Heart left ventricle (tissue), 16 donors: ENCODE measurements at regions of chr4 and their contacts with region 1.

Region 1: DNA sequence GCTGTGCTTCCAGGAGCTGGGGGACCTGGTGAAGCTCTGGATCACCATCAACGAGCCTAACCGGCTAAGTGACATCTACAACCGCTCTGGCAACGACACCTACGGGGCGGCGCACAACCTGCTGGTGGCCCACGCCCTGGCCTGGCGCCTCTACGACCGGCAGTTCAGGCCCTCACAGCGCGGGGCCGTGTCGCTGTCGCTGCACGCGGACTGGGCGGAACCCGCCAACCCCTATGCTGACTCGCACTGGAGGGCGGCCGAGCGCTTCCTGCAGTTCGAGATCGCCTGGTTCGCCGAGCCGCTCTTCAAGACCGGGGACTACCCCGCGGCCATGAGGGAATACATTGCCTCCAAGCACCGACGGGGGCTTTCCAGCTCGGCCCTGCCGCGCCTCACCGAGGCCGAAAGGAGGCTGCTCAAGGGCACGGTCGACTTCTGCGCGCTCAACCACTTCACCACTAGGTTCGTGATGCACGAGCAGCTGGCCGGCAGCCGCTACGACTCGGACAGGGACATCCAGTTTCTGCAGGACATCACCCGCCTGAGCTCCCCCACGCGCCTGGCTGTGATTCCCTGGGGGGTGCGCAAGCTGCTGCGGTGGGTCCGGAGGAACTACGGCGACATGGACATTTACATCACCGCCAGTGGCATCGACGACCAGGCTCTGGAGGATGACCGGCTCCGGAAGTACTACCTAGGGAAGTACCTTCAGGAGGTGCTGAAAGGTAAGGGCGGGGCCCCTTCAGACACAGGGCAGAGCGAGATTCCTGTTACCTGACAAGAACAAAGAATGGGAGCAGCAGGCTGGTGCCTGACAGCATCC is 11.8 kb downstream of the RPL9 start:
- DNase-seq: peak; percentile 43 to 78 (median 62)
- ATAC-seq: peak; percentile 57 to 87 (median 82)
- H3K4me3 ChIP-seq: peak overlapping the region; percentile 20 to 58 (median 48)
- H3K27ac ChIP-seq: peak overlapping the region in 3 of 12 donors; percentile 1 to 22 (median 17)
- H3K4me1 ChIP-seq: peaks cover 0 to 13% (median 5%) of the 10 kb centered on the region in 12 donors
- H3K27me3 ChIP-seq: no peaks in the 10 kb centered on the region
- CTCF ChIP-seq: peak in 4 of 12 donors; percentile 21 to 42 (median 29)
- POLR2A ChIP-seq: no peak

Region 2: DNA sequence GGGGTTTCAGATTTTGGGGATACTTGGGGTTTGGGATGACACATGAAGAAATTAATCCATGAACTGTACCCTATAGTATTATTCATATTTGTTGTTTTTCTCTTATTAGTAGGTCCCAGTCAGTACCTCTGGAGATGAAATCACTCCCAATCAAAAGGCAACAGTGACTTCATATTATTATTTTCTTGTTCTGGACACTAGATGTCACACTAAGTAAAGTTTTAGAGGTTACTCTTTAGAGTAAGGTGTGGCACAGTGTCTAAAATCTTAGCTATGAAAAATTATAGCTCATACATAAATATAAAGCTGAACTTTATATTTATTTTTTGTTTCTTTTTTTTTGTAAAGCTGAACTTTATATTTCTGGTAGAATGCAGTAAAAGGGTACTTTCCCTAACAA is 544.3 kb before region 1 on chr4:
- intact Hi-C with region 1: loop called in 2 of 10 experiments (anchors 5 to 10 kb)
- DNase-seq: no peak
- ATAC-seq: peak in 2 of 4 donors; percentile 65 to 69
- H3K4me3 ChIP-seq: no peak overlapping the region
- H3K27ac ChIP-seq: no peak overlapping the region
- H3K4me1 ChIP-seq: peaks cover 0 to 20% (median 1%) of the 10 kb centered on the region in 12 donors
- H3K27me3 ChIP-seq: no peaks in the 10 kb centered on the region
- CTCF ChIP-seq: peak in 11 of 12 donors; percentile 11 to 56 (median 38)
- POLR2A ChIP-seq: no peak

Region 3: DNA sequence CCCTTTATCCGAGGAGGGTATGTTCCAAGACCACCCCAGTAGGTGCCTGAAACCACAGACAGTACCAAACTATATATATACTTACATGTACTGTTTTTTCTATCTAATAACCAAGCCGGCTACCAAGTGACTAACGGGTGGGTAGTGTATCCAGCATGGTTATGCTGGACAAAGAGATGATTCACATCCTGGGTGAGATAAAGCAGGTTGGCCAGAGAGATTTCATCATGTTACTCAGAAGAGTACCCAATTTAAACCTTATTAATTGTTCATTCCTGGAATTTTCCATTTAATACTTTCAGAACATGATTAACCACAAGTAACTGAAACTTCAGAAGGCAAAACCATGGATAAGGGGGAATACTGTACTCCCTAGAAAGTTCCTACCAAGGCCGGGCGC is 127.3 kb before region 1 on chr4:
- intact Hi-C with region 1: loop called in 1 of 10 experiments (anchors 10 kb)
- DNase-seq: no peak
- ATAC-seq: no peak
- H3K4me3 ChIP-seq: no peak overlapping the region
- H3K27ac ChIP-seq: no peak overlapping the region
- H3K4me1 ChIP-seq: no peaks in the 10 kb centered on the region
- H3K27me3 ChIP-seq: no peaks in the 10 kb centered on the region
- CTCF ChIP-seq: no peak
- POLR2A ChIP-seq: no peak